Activated CD8-positive, alpha-beta T cell treated with anti-CD3 and anti-CD28 coated beads, Interleukin-2, amount 10 ng/mL, durations not matched to agents 7 days and 5 days (primary cell): ENCODE measurements at regions of chr17 and their contacts with region 1.

Region 1: GRCh38 chr17:68398691-68399637 is 58.3 kb downstream of the WIPI1 start:
- DNase-seq: peak; percentile 64
- ATAC-seq: peak; percentile 65
- H3K4me3 Mint-ChIP-seq: peak overlapping the region; percentile 43
- H3K27ac Mint-ChIP-seq: peak overlapping the region; percentile 96
- H3K4me1 Mint-ChIP-seq: peaks cover 39% of the 10 kb centered on the region
- H3K27me3 Mint-ChIP-seq: no peaks in the 10 kb centered on the region

Region 2: GRCh38 chr17:68221760-68222159 is 177.2 kb before region 1 on chr17:
- CTCF ChIA-PET with region 1: no interaction called
- POLR2A ChIA-PET with region 1: no interaction called
- DNase-seq: no peak
- ATAC-seq: no peak
- H3K4me3 Mint-ChIP-seq: no peak overlapping the region
- H3K27ac Mint-ChIP-seq: no peak overlapping the region
- H3K4me1 Mint-ChIP-seq: peaks cover 8% of the 10 kb centered on the region
- H3K27me3 Mint-ChIP-seq: no peaks in the 10 kb centered on the region

Region 3: DNA sequence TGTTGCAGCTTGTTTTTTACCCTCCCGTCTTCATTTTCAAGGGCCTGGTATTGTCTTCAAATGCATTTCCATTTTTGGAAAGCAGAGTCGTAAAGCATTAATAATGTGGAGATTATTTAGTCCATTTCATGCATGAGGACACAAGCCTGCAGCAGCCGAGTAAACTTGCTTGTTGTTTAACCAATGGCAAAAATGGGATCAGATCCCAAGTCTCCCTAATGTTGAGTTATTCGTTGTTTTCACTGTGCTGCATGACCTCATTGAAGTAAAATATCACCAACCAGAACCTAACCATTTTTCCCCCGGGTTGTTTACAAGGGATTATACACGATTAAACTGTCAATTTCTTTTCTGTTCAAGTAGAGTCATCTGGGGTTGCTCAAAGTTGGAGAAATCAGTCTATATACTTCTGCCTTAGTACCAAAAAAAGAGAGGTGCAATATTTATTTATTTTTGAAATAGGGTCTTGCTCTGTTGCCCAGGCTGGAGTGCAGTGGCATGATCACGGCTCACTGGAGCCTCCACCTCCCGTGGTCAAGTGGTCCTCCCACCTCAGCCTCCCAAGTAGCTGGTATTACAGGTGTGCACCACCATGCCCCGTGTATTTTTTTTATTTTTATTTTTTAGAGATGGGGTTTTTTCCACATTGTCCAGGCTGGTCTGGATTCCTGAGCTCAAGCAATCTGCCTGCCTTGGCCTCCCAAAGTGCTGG is 138.8 kb before region 1 on chr17:
- CTCF ChIA-PET with region 1: interaction called, 40 read pairs
- POLR2A ChIA-PET with region 1: no interaction called
- DNase-seq: no peak
- ATAC-seq: no peak
- H3K4me3 Mint-ChIP-seq: peak overlapping the region; percentile 8
- H3K27ac Mint-ChIP-seq: peak overlapping the region; percentile 89
- H3K4me1 Mint-ChIP-seq: peaks cover 75% of the 10 kb centered on the region
- H3K27me3 Mint-ChIP-seq: no peaks in the 10 kb centered on the region

Region 4: GRCh38 chr17:68356520-68356919 is 42.4 kb before region 1 on chr17:
- CTCF ChIA-PET with region 1: interaction called, 35 read pairs
- POLR2A ChIA-PET with region 1: no interaction called
- DNase-seq: peak; percentile 88
- ATAC-seq: peak; percentile 94
- H3K4me3 Mint-ChIP-seq: peak overlapping the region; percentile 60
- H3K27ac Mint-ChIP-seq: peak overlapping the region; percentile 86
- H3K4me1 Mint-ChIP-seq: peaks cover 75% of the 10 kb centered on the region
- H3K27me3 Mint-ChIP-seq: no peaks in the 10 kb centered on the region

Region 5: DNA sequence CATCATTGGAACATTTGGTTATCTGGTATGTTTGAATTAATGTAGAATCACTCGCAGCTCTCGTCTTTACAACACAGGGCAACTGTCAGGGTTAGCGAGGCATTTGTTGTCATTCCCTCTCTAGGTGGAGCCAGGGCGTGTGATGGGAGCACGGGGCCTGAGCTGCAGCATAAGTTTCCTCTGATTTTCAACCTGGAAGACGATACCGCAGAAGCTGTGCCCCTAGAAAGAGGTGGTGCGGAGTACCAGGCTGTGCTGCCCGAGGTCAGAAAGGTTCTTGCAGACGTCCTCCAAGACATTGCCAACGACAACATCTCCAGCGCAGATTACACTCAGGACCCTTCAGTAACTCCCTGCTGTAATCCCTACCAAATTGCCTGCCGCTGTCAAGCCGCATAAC is 21.1 kb after region 1 on chr17:
- CTCF ChIA-PET with region 1: interaction called, 20 read pairs
- POLR2A ChIA-PET with region 1: no interaction called
- DNase-seq: no peak
- ATAC-seq: no peak
- H3K4me3 Mint-ChIP-seq: no peak overlapping the region
- H3K27ac Mint-ChIP-seq: no peak overlapping the region
- H3K4me1 Mint-ChIP-seq: peaks cover 12% of the 10 kb centered on the region
- H3K27me3 Mint-ChIP-seq: no peaks in the 10 kb centered on the region

Region 6: DNA sequence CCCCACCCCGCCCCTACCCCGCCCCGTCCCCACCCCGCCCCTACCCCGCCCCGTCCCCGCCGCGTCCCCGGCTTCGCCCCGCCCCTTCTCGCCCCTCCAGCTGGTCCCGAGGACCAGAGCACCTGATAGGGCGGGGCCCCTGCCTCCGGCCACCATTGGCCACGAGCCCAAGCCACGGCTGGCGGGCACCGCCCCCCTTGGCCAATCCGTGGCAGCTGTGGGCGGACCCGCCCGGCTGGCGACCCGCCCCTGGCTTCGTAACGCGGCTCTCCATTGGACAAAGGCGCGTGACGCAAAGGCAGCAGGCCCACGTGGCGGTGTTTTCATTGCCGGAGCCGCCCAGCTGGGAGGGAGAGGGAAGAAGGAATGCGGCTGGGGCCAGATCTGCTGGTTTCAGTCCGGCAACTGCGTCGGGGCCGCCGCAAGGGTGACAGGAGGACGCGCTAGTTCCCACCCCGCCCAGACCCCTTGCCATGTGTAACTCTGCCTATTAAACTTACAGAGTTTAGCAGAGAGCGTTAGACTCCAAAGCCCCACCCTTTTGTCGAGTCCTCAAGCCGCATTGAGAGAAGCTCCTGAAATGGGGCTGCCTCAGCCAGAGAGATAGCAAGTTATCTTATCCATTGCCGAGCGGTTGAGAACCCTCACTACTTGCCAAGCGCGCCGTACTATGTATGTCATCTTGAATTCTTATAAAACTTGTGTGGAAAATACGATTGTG is 58.7 kb after region 1 on chr17:
- CTCF ChIA-PET with region 1: interaction called, 19 read pairs
- POLR2A ChIA-PET with region 1: no interaction called
- DNase-seq: peak; percentile 98
- ATAC-seq: peak; percentile 95
- H3K4me3 Mint-ChIP-seq: peak overlapping the region; percentile 77
- H3K27ac Mint-ChIP-seq: peak overlapping the region; percentile 88
- H3K4me1 Mint-ChIP-seq: peaks cover 82% of the 10 kb centered on the region
- H3K27me3 Mint-ChIP-seq: no peaks in the 10 kb centered on the region

Region 7: DNA sequence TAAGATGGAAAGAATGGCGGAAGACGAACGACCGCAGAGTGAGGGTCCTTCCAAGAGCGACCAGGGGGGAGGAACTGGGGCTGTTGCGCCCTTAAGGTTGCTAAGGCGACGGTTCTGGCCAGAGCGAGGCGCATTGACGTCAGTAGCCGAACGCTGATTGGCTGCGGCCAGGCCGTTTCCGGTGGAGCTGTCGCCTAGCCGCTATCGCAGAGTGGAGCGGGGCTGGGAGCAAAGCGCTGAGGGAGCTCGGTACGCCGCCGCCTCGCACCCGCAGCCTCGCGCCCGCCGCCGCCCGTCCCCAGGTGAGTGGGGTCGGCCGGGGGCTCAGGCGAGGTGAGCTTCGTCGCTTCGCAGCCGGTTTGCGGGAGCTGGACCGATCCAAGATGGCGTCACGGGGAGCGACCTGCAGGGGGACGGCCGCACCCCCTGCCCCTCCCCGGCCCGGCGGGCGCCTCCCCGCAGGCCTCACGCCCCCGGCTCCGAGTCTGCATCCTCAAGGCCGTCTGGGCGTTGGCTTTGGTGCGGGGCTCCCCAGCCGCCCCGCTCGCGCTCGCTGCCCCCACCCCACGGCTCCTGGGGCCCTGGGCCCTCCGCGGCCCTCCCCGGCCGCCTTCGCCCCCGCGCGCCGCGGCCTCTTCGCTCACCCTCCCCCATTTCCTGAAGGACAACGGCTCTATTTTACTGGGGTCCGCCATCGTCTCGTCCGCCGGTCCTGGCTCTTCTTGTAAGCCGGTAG is 113.5 kb after region 1 on chr17 and contains the start of gene PRKAR1A:
- CTCF ChIA-PET with region 1: no interaction called
- POLR2A ChIA-PET with region 1: no interaction called
- DNase-seq: peak; percentile 96
- ATAC-seq: peak; percentile 85
- H3K4me3 Mint-ChIP-seq: peak within 1 kb of the TSS; percentile 94
- H3K27ac Mint-ChIP-seq: peak within 1 kb of the TSS; percentile 99
- H3K4me1 Mint-ChIP-seq: peaks cover 61% of the 10 kb centered on the region
- H3K27me3 Mint-ChIP-seq: no peaks in the 10 kb centered on the region
- total RNA-seq, gene PRKAR1A: 210 to 221 TPM